ENCODE measurements at regions of chr14 and their contacts with region 1.

Region 1: GRCh38 chr14:105709281-105710118 is 183.1 kb downstream of the TMEM121 start:
- DNase-seq: peak; percentile 67

Region 2: DNA sequence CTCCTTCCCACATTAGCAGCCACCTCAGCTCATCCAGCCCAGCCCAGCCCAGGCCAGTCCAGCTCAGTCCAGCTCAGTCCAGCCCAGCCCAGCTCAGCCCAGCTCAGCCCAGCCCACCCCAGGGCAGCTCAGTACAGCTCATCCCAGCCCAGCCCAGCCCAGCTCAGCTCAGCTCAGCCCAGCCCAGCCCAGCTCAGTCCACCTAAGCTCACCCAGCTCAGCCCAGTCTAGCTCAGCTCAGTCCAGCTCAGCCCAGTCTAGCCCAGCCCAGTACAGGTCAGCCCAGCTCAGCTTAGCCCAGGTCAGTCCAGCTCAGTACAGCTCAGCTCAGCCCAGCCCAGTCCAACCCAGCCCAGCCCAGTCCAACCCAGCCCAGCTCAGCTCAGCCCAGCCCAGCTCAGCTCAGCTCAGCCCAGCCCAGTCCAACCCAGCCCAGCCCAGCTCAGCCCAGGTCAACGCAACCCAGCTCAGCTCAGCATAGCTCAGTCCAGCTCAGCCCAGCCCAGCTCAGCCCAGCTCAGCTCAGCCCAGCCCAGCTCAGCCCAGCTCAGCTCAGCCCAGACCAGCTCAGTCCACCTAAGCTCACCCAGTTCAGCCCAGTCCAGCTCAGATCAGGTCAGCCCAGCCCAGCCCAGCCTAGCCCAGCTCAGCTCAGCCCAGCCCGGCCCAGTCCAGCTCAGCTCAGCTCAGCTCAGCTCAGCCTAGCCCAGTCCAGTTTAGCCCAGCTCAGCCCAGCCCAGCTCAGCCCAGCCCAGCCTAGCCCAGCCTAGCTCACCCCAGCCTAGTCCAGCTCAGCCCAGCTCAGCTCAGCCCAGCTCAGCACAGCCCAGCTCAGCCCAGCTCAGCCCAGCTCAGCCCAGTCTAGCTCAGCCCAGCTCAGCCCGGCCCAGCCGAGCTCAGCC is 120.1 kb before region 1 on chr14:
- intact Hi-C with region 1: loop called in 1 of 2 experiments (anchors 5 kb)
- DNase-seq: no peak

Region 3: GRCh38 chr14:105647764-105648608 is 61.5 kb before region 1 on chr14:
- intact Hi-C with region 1: no loop called
- DNase-seq: peak; percentile 77

Region 4: DNA sequence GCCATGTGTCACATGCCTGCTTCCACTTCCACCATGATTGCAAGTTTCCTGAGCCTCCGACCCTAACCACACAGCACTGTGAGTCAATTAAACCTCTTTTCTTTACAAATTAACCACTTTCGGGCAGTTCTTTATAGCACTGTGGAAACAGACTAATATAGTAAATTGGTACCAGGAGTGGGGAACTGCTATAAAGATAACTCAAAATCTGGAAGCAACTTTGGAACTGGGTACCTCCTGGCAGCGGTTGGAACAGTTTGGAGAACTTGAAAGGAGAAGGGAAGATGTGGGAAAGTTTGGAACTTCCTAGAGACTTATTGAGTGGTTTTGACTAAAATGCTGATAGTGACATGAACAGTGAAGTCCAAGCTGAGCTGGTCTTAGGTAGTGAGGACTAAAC is 253.0 kb after region 1 on chr14:
- intact Hi-C with region 1: no loop called
- DNase-seq: no peak

Measured in posterior vena cava (tissue), 2 donors.